ENCODE measurements at regions of chr16 and their contacts with region 1.

Region 1: DNA sequence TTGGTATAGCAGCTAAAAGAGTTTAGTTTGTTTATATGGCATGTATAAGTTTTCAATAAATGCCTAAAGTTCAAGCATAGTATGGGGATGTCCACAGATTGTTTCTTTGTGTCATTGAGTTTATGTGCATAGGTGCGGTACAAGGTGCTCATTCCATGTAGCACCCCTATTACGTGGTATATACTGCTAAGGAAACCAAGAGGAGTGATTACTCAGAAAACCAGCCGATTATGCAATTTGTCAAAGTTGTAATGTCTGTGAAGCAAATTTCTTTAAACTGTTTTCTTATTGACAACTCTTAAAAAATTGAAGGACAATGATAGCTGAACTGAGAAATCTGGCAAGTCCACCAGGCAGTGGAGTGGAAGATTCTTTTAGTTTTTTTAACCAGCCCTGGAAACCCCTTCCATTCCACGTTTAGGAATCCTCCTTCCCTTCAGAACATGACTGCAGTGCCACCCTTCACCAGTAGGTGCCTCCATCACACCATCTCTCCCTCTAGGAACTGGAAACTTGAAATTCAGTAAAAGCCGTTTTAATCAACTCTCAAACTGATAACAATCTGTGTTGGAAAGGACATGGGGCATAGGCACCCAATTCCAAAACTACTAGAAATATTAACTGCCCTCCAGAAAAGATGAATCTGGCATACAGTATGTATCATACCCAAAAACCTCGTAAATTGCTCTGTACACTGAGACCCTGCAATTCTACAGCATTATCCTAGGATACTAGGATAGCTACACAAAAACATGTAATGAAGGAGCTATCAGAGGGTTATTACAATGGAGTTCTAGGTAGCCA is 43.5 kb downstream of the REXO5 start:
- DNase-seq: peak; percentile 50
- H3K4me3 ChIP-seq: peak overlapping the region in 1 of 2 experiments; percentile 40; a peak in 1 of 4 replicates
- H3K27ac ChIP-seq: peak overlapping the region in 1 of 2 experiments; percentile 7; a peak in 1 of 4 replicates
- H3K4me1 ChIP-seq: peaks cover 0 to 4% of the 10 kb centered on the region in 2 experiments; a peak in 2 of 4 replicates
- H3K27me3 ChIP-seq: no peaks in the 10 kb centered on the region
- CTCF ChIP-seq: peak; percentile 100
- EP300 ChIP-seq: no peak
- RAD21 ChIP-seq: peak; percentile 96

Region 2: DNA sequence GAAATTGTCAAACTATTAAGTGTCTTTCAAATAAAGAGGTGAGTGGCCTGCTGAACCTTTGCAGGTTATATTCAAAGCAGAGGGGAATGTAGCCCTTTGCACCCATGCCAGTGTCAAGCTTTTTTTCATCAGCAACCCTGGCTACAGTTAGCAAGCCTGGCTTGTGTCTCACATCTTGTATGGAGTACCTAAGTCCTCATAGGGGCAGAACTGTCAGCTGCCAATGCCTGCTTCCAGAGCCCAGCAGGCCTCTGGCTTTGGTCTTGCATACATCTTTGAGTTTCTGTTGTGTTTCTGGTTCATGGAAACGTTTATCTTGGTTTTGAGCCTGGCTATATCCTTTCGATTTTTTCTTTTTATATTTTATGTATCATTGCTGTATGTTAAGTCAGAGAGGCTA is 16.7 kb before region 1 on chr16:
- CTCF ChIA-PET with region 1: interaction called, 25 read pairs
- POLR2A ChIA-PET with region 1: no interaction called
- DNase-seq: no peak
- H3K4me3 ChIP-seq: no peak overlapping the region
- H3K27ac ChIP-seq: no peak overlapping the region
- H3K4me1 ChIP-seq: no peaks in the 10 kb centered on the region; a peak in 1 of 4 replicates
- H3K27me3 ChIP-seq: no peaks in the 10 kb centered on the region
- CTCF ChIP-seq: no peak
- EP300 ChIP-seq: no peak
- RAD21 ChIP-seq: no peak

Region 3: DNA sequence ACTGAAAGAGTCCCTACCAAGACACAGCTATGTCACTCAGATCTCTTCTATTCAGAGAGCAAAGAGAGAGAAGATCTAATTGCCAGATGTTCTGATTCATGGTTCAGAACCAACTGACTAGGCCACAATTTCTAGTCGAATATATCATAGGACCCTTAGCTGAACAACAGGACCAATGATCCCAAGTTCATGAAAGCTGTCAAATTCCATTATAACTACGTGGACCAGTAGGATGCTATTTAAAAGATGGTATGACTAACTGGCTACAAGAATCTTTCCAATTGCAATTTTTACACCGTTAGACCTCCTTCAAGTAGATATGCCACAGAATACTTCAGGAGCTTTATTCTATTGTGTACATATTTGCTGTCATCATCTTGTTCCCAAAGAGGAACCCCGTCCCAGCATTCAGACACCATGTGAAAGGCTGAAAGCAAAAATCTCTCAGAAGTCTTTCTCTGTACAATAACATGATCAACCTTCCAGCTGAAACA is 24.3 kb after region 1 on chr16:
- CTCF ChIA-PET with region 1: interaction called, 23 read pairs
- POLR2A ChIA-PET with region 1: no interaction called
- DNase-seq: no peak
- H3K4me3 ChIP-seq: no peak overlapping the region
- H3K27ac ChIP-seq: peak overlapping the region in 1 of 2 experiments; percentile 61; a peak in 2 of 4 replicates
- H3K4me1 ChIP-seq: peaks cover 16 to 21% of the 10 kb centered on the region in 2 experiments
- H3K27me3 ChIP-seq: no peaks in the 10 kb centered on the region
- CTCF ChIP-seq: no peak
- EP300 ChIP-seq: no peak
- RAD21 ChIP-seq: no peak

Region 4: GRCh38 chr16:21083729-21084268 is 234.0 kb after region 1 on chr16:
- CTCF ChIA-PET with region 1: interaction called, 50 read pairs
- POLR2A ChIA-PET with region 1: no interaction called
- DNase-seq: peak; percentile 60
- H3K4me3 ChIP-seq: no peak overlapping the region; a peak in 1 of 4 replicates
- H3K27ac ChIP-seq: no peak overlapping the region
- H3K4me1 ChIP-seq: no peaks in the 10 kb centered on the region
- H3K27me3 ChIP-seq: no peaks in the 10 kb centered on the region
- CTCF ChIP-seq: peak; percentile 75
- EP300 ChIP-seq: no peak
- RAD21 ChIP-seq: peak; percentile 82

Measured in SK-N-SH (cell line).